Activated naive CD4-positive, alpha-beta T cell treated with anti-CD3 and anti-CD28 coated beads for 36 hours (primary cell): ENCODE measurements at regions of chr9 and their contacts with region 1.

Region 1: DNA sequence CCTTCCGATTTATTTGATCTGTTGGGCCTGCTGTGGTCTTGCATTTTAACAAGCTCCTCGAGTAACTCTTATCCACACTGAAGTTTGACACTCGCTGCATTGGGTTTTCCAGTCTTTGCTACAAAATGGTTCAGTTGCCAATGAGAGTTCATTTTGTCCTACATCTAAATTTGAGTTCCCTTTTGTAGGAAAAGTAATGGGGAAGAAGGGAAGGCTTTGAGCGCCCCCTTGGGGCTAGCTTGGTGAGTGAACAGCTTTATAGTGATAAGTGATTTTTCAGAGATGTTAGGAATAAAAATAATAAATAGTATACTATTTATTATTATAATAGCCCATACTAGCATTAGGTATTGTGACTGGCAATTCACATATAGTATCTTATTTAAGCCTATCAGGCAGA is 89.9 kb upstream of the GNAQ start:
- DNase-seq: peak; percentile 79
- H3K4me3 Mint-ChIP-seq: no peak overlapping the region
- H3K27ac Mint-ChIP-seq: no peak overlapping the region
- H3K4me1 Mint-ChIP-seq: peaks cover 33% of the 10 kb centered on the region
- H3K27me3 Mint-ChIP-seq: no peaks in the 10 kb centered on the region

Region 2: DNA sequence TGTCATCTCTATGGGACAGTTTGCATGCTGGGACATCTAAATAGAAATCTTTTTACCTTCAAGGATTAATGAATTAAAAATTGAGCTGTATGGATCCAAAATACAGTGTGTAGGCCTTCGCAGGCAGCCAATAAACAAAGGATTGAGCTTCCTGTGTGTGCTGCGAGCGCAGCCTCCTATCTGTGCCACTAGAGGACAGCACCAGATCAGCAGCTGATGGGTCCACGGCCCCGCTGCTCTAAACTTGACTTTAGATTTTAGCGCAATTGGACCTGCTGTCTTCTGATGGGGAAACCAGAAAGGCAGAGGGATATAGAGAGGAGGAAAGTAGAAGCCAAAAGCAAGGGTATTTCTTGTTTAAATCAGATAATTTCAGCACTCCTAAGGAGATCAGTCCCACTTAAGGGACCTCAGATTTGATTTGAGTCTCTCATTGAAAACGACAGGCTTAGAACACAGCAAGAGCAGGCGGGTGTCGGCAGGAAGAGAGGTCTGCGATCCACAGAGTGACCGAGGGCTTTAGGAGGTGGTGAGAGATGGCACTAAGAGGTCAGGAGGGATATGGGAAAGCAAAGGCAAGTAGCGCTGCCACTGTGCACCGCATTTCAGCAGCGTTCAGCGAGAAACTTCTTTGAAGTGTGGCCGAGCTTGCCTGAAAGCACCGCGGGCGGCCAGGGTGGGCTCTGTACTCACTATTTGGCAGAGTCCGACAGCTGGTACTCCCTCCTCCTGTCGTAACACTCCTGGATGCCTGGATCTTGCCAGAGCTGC is 687.6 kb before region 1 on chr9:
- CTCF ChIA-PET with region 1: interaction called, 5 read pairs
- intact Hi-C with region 1: loop called (anchors 1 kb)
- DNase-seq: peak; percentile 70
- H3K4me3 Mint-ChIP-seq: no peak overlapping the region
- H3K27ac Mint-ChIP-seq: no peak overlapping the region
- H3K4me1 Mint-ChIP-seq: peaks cover 3% of the 10 kb centered on the region
- H3K27me3 Mint-ChIP-seq: no peaks in the 10 kb centered on the region

Region 3: DNA sequence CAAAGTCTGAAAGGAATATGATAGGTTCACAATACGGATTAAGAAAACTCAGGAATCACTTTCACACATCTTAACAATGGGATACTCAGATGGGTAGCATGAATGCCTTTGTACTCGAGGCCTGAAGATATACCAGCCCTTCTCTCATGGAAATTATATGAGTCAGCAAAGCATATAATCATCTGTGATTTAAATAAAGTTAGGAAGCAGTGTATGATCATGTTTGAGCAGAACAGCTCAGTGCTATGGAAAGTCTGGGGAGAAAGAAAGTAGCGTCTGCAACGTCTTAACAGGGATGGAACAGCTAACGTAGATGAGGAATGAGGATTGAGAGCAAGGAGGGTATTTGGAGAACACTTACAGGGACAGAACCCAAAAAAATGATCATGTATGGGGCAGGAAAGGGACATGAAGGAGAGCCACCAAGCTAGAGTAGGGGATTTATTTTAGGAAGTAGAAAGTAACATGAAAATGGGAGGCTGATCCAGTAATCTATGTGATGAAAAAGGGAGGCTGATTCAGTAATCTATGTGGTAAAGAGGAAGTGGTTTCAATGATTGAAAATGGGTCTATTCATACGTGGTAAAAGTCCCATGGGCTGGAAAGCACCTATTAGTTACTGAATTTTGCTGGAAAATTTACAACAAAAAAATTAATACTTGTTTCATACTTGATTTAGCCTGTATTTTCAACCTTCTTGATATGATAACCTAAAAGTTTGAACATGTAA is 559.3 kb before region 1 on chr9:
- CTCF ChIA-PET with region 1: no interaction called
- intact Hi-C with region 1: loop called (anchors 2 kb)
- DNase-seq: no peak
- H3K4me3 Mint-ChIP-seq: no peak overlapping the region
- H3K27ac Mint-ChIP-seq: no peak overlapping the region
- H3K4me1 Mint-ChIP-seq: peaks cover 7% of the 10 kb centered on the region
- H3K27me3 Mint-ChIP-seq: peaks cover 10% of the 10 kb centered on the region

Region 4: GRCh38 chr9:77725820-77726219 is 395.7 kb before region 1 on chr9:
- CTCF ChIA-PET with region 1: no interaction called
- intact Hi-C with region 1: loop called (anchors 1 kb)
- DNase-seq: peak; percentile 59
- H3K4me3 Mint-ChIP-seq: no peak overlapping the region
- H3K27ac Mint-ChIP-seq: peak overlapping the region; percentile 57
- H3K4me1 Mint-ChIP-seq: peaks cover 49% of the 10 kb centered on the region
- H3K27me3 Mint-ChIP-seq: no peaks in the 10 kb centered on the region

Region 5: GRCh38 chr9:77841739-77842386 is 279.6 kb before region 1 on chr9:
- CTCF ChIA-PET with region 1: interaction called, 4 read pairs
- intact Hi-C with region 1: loop called (anchors 2 kb)
- DNase-seq: no peak
- H3K4me3 Mint-ChIP-seq: no peak overlapping the region
- H3K27ac Mint-ChIP-seq: no peak overlapping the region
- H3K4me1 Mint-ChIP-seq: peaks cover 7% of the 10 kb centered on the region
- H3K27me3 Mint-ChIP-seq: no peaks in the 10 kb centered on the region

Region 6: DNA sequence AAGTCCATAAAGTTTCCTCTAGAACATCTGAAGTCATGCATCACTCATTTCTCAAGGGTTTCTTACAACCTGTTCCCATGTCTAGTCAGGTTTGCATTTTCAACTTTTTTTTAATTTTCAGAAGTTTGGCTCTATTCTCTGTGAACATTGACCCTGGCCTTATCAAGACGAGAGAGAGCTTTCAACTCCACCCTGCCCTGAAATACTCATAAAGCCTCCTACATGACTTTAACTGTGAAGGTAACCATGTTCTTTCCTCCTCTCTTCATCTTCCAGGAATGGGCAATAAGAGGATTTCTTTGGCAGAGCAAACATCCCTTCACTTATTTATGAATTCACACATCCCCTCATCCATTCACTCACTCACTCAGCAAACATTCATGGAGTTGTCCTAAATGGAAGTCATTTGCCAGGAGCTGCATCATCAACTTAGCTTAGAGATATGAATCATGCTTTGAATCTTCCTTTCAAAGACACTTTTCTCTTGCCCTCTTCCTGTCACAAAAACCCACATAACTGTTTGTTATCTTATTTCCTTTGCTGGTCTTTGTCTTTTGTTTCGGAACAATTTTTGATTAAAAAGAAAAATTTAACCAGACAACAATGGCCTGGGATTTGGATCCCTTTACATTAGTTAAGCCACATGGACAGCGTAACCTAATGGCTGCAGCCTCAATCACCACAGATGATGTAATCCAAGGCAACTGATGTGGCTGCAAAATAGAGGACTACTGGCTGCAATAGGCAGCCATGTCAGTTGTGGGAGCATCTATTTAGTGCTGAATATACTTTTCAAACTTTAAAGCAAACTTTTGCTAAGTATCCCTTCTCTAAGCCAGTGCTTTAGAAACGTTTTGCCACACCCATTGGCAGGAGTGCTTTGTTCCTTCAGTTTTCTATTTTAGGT is 46.9 kb before region 1 on chr9:
- CTCF ChIA-PET with region 1: interaction called, 3 read pairs
- intact Hi-C with region 1: loop called (anchors 1 kb)
- DNase-seq: peak; percentile 54
- H3K4me3 Mint-ChIP-seq: no peak overlapping the region
- H3K27ac Mint-ChIP-seq: peak overlapping the region; percentile 81
- H3K4me1 Mint-ChIP-seq: peaks cover 43% of the 10 kb centered on the region
- H3K27me3 Mint-ChIP-seq: no peaks in the 10 kb centered on the region

Region 7: GRCh38 chr9:78296893-78297671 is 175.6 kb after region 1 on chr9 and contains the start of gene PSAT1:
- CTCF ChIA-PET with region 1: no interaction called
- intact Hi-C with region 1: loop called (anchors 2 kb)
- DNase-seq: peak; percentile 95
- H3K4me3 Mint-ChIP-seq: peak within 1 kb of the TSS; percentile 81
- H3K27ac Mint-ChIP-seq: peak within 1 kb of the TSS; percentile 94
- H3K4me1 Mint-ChIP-seq: peaks cover 40% of the 10 kb centered on the region
- H3K27me3 Mint-ChIP-seq: no peaks in the 10 kb centered on the region
- total RNA-seq, gene PSAT1: 235 to 240 TPM

Region 8: DNA sequence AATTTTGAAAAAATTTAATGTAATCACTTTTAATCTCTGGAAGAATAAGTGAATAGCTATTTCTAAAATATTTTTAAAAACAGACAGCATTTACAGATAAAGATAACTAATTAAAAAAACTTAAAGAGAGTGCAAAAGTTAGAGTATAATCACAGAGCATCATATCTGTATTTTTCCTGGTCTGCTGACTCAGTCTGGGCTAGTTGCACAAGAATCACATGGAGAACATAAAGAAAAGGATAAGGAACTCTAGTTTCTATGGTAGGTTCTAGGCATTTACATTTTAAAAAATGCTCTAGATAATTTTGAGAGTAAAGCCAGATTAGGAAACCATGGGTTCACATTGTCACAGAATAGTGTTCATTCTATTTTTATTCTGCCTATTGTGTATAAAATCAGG is 522.9 kb after region 1 on chr9:
- CTCF ChIA-PET with region 1: no interaction called
- intact Hi-C with region 1: no loop called
- DNase-seq: no peak
- H3K4me3 Mint-ChIP-seq: no peak overlapping the region
- H3K27ac Mint-ChIP-seq: no peak overlapping the region
- H3K4me1 Mint-ChIP-seq: no peaks in the 10 kb centered on the region
- H3K27me3 Mint-ChIP-seq: peaks cover 3% of the 10 kb centered on the region